ENCODE measurements at regions of chr11 and their contacts with region 1.

Region 1: GRCh38 chr11:72683782-72684200 is 9.6 kb upstream of the PDE2A start:
- DNase-seq: peak in 1 of 2 experiments; percentile 99
- H3K4me3 ChIP-seq: no peak overlapping the region
- H3K27ac ChIP-seq: no peak overlapping the region
- H3K4me1 ChIP-seq: peaks cover 0 to 16% (median 6%) of the 10 kb centered on the region in 4 experiments; a peak in 4 of 7 replicates
- H3K27me3 ChIP-seq: peaks cover 0 to 5% (median under 1%) of the 10 kb centered on the region in 4 experiments; a peak in 2 of 7 replicates
- CTCF ChIP-seq: peak; percentile 98 to 99 (median 99)
- EP300 ChIP-seq: no peak
- POLR2A ChIP-seq: no peak
- RAD21 ChIP-seq: peak; percentile 95 to 98

Region 2: DNA sequence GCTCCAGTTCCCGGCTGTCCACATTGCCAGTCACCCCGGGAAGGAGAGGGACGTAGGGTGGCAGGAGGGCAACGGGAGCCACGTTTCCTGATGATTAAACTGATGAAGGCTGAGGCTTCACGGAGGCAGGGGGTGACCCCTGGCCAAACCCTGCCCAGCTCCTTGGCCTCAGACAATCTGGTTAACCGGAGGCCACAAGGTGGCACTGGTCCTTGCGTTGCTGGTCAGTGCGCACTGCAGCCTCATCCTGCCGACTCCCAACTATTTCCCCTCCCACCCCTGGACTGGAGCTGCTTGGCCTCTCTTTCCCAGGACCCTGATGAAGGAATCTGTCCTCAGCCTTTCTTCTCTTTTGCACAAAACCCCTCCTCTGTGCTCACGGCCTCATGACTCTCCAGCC is 84.9 kb before region 1 on chr11:
- CTCF ChIA-PET with region 1: interaction called, 384 read pairs
- POLR2A ChIA-PET with region 1: interaction called, 4 read pairs
- DNase-seq: peak in 1 of 2 experiments; percentile 70
- H3K4me3 ChIP-seq: no peak overlapping the region
- H3K27ac ChIP-seq: no peak overlapping the region
- H3K4me1 ChIP-seq: peaks cover 5 to 26% (median 20%) of the 10 kb centered on the region in 4 experiments
- H3K27me3 ChIP-seq: peaks cover 0 to 14% (median 3%) of the 10 kb centered on the region in 4 experiments; a peak in 4 of 7 replicates
- CTCF ChIP-seq: peak; percentile 82 to 86 (median 83)
- EP300 ChIP-seq: no peak
- POLR2A ChIP-seq: no peak
- RAD21 ChIP-seq: peak; percentile 68 to 78

Region 3: GRCh38 chr11:72614381-72614780 is 69.4 kb before region 1 on chr11:
- CTCF ChIA-PET with region 1: interaction called, 158 read pairs
- POLR2A ChIA-PET with region 1: interaction called, 4 read pairs
- DNase-seq: no peak
- H3K4me3 ChIP-seq: no peak overlapping the region
- H3K27ac ChIP-seq: no peak overlapping the region
- H3K4me1 ChIP-seq: peaks cover 0 to 5% (median 1%) of the 10 kb centered on the region in 4 experiments; a peak in 1 of 7 replicates
- H3K27me3 ChIP-seq: no peaks in the 10 kb centered on the region; a peak in 1 of 7 replicates
- CTCF ChIP-seq: no peak
- EP300 ChIP-seq: no peak
- POLR2A ChIP-seq: no peak
- RAD21 ChIP-seq: no peak

Region 4: DNA sequence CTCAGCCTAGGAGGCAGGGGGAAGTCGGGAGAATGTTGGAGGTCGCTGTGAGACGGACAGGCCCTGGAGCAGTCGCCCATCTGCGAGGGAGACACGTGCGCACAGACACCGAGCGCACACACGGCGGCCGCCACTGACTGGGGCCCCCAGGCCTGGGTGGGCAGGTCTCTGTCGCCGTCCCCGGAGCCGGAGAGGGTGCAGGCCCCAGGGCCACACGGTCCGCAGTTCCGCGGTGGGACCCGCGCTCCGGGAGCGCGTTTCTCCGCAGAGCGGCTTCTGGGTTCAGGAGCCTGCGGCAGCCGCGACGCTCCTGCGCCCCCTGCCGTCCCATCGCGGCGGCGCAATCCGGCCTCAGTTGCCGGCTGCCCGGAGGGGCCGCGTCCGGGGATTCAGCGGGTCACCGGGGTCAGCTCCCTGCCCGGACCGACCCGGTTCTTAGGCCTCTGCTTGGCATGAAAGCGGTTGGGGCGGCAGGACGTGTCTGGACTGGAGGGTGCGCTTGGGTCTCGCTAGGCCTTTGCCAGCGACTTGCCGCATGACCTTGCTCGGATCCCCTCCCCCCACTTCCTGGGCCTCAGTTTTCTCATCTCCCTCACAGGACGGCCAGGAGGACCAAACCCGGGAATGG is 40.8 kb before region 1 on chr11:
- CTCF ChIA-PET with region 1: interaction called, 97 read pairs
- POLR2A ChIA-PET with region 1: interaction called, 12 read pairs
- DNase-seq: peak; percentile 19 to 92
- H3K4me3 ChIP-seq: peak overlapping the region; percentile 14 to 59 (median 30); a peak in 5 of 8 replicates
- H3K27ac ChIP-seq: no peak overlapping the region
- H3K4me1 ChIP-seq: peaks cover 0 to 2% (median 0%) of the 10 kb centered on the region in 4 experiments; a peak in 1 of 7 replicates
- H3K27me3 ChIP-seq: peaks cover 16 to 49% (median 37%) of the 10 kb centered on the region in 4 experiments
- CTCF ChIP-seq: peak; percentile 84 to 96 (median 94)
- EP300 ChIP-seq: no peak
- POLR2A ChIP-seq: no peak
- RAD21 ChIP-seq: peak; percentile 83 to 88

Region 5: GRCh38 chr11:72668611-72669347 is 15.0 kb before region 1 on chr11:
- CTCF ChIA-PET with region 1: interaction called, 97 read pairs
- POLR2A ChIA-PET with region 1: interaction called, 3 read pairs
- DNase-seq: no peak
- H3K4me3 ChIP-seq: no peak overlapping the region
- H3K27ac ChIP-seq: no peak overlapping the region
- H3K4me1 ChIP-seq: peaks cover 0 to 13% (median 7%) of the 10 kb centered on the region in 4 experiments; a peak in 6 of 7 replicates
- H3K27me3 ChIP-seq: peaks cover 0 to 8% (median under 1%) of the 10 kb centered on the region in 4 experiments; a peak in 4 of 7 replicates
- CTCF ChIP-seq: no peak
- EP300 ChIP-seq: no peak
- POLR2A ChIP-seq: no peak
- RAD21 ChIP-seq: no peak

Region 6: GRCh38 chr11:72722050-72722748 is 38.4 kb after region 1 on chr11:
- CTCF ChIA-PET with region 1: interaction called, 10 read pairs
- POLR2A ChIA-PET with region 1: no interaction called
- DNase-seq: peak in 1 of 2 experiments; percentile 86
- H3K4me3 ChIP-seq: no peak overlapping the region
- H3K27ac ChIP-seq: 0 out of 2 replicates have a peak overlapping the region, but pooled peaks have one; percentile 66
- H3K4me1 ChIP-seq: peaks cover 0 to 9% (median 5%) of the 10 kb centered on the region in 4 experiments; a peak in 3 of 7 replicates
- H3K27me3 ChIP-seq: no peaks in the 10 kb centered on the region
- CTCF ChIP-seq: no peak
- EP300 ChIP-seq: no peak
- POLR2A ChIP-seq: no peak
- RAD21 ChIP-seq: no peak

Region 7: GRCh38 chr11:72758690-72759389 is 75.0 kb after region 1 on chr11:
- CTCF ChIA-PET with region 1: no interaction called
- POLR2A ChIA-PET with region 1: no interaction called
- DNase-seq: no peak
- H3K4me3 ChIP-seq: no peak overlapping the region
- H3K27ac ChIP-seq: no peak overlapping the region
- H3K4me1 ChIP-seq: peaks cover 0 to 10% (median 2%) of the 10 kb centered on the region in 4 experiments; a peak in 4 of 7 replicates
- H3K27me3 ChIP-seq: peaks cover 0 to 8% (median 4%) of the 10 kb centered on the region in 4 experiments; a peak in 3 of 7 replicates
- CTCF ChIP-seq: no peak
- EP300 ChIP-seq: no peak
- POLR2A ChIP-seq: no peak
- RAD21 ChIP-seq: no peak

Measured in H1 (cell line).